Mammary epithelial cell (primary cell): ENCODE measurements at regions of chr6 and their contacts with region 1.

Region 1: GRCh38 chr6:124961777-124962611 is at the start of gene RNF217:
- DNase-seq: peak; percentile 62
- H3K4me3 ChIP-seq: peak within 1 kb of the TSS; percentile 74 to 87 (median 87)
- H3K27ac ChIP-seq: peak within 1 kb of the TSS; percentile 87
- H3K4me1 ChIP-seq: peaks cover 43% of the 10 kb centered on the region
- H3K27me3 ChIP-seq: no peaks in the 10 kb centered on the region
- CTCF ChIP-seq: no peak
- total RNA-seq, gene RNF217: 53.9 to 103 TPM

Region 2: DNA sequence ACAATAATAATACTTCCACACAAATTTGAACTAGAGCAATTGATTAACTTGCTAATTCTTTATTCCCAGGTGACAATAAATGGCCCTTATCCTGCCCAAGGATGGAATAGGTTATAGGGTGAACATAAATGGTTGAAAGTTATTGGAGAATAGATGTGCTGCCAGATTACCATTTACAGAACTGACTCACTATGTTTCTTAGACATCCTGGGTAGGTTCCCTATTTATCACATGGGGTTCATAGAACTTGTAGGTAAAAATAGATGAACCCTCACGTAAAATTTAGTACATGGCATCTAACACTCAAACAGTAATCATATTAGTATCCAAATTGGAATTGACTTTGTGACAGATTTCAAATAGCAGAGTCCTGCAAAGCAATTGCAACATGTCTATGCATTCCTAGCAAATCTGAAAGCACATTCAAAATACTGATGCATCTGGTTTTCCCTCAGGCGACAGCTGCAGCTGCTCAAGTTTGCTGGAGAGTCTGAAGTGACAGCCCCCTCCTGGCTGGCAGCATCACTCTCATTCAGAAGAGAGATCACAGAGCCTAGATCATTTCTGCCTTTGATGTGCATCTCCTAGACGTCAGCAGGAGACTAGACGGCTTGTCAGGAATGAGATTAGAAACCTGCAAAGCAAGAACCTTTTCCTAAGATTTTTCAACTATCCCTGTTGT is 80.0 kb before region 1 on chr6:
- CTCF ChIA-PET with region 1: no interaction called
- dilution Hi-C with region 1: no loop called
- in situ Hi-C with region 1: loop called in 1 of 2 experiments (anchors 5 kb)
- intact Hi-C with region 1: no loop called
- DNase-seq: peak; percentile 31
- H3K4me3 ChIP-seq: peak overlapping the region in 1 of 3 experiments; percentile 3
- H3K27ac ChIP-seq: no peak overlapping the region
- H3K4me1 ChIP-seq: peaks cover 18% of the 10 kb centered on the region
- H3K27me3 ChIP-seq: no peaks in the 10 kb centered on the region
- CTCF ChIP-seq: no peak

Region 3: DNA sequence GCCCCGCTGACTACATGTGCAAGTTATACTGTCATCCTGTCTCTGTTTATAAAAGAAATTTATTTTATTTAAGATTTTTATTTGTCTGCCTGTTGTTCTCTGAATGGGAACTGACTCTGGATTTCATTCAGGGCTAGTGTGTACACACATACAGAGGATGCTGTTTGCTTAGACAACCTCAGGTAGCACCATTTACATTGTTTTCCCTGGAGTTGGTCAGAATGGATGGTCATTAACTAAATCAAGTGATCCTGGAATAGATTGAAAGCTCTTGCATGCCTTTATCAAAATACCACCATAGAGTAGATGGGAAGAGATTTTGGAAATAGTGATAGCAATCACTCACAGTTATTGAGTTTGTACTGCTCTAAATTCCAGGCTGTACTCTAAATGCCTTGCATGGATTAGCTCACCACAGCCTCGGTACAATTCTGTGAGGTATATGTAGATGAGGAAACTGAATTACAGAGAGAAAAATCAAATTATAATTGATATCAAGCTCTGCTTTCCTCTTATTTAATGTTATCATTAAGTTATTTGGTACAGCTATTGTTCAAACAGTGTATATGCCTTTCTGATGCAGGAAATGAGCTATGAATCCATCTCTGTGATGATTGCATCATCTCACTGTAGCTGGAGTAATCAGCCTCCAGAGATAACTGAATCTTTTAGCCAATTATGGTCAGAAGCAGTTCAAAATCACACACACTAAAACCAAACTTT is 52.1 kb after region 1 on chr6:
- CTCF ChIA-PET with region 1: no interaction called
- dilution Hi-C with region 1: no loop called
- in situ Hi-C with region 1: no loop called
- intact Hi-C with region 1: loop called (anchors 2 kb)
- DNase-seq: peak; percentile 46
- H3K4me3 ChIP-seq: no peak overlapping the region
- H3K27ac ChIP-seq: peak overlapping the region; percentile 60
- H3K4me1 ChIP-seq: peaks cover 22% of the 10 kb centered on the region
- H3K27me3 ChIP-seq: no peaks in the 10 kb centered on the region
- CTCF ChIP-seq: no peak

Region 4: GRCh38 chr6:125031385-125031784 is 69.4 kb after region 1 on chr6:
- CTCF ChIA-PET with region 1: no interaction called
- dilution Hi-C with region 1: no loop called
- in situ Hi-C with region 1: no loop called
- intact Hi-C with region 1: no loop called
- DNase-seq: no peak
- H3K4me3 ChIP-seq: no peak overlapping the region
- H3K27ac ChIP-seq: no peak overlapping the region
- H3K4me1 ChIP-seq: no peaks in the 10 kb centered on the region
- H3K27me3 ChIP-seq: no peaks in the 10 kb centered on the region
- CTCF ChIP-seq: no peak

Region 5: GRCh38 chr6:125099211-125100073 is 137.4 kb after region 1 on chr6:
- CTCF ChIA-PET with region 1: no interaction called
- dilution Hi-C with region 1: loop called (anchors 25 kb)
- in situ Hi-C with region 1: no loop called
- intact Hi-C with region 1: no loop called
- DNase-seq: peak; percentile 44
- H3K4me3 ChIP-seq: peak overlapping the region; percentile 28 to 61 (median 50)
- H3K27ac ChIP-seq: no peak overlapping the region
- H3K4me1 ChIP-seq: peaks cover 62% of the 10 kb centered on the region
- H3K27me3 ChIP-seq: no peaks in the 10 kb centered on the region
- CTCF ChIP-seq: no peak

Region 6: DNA sequence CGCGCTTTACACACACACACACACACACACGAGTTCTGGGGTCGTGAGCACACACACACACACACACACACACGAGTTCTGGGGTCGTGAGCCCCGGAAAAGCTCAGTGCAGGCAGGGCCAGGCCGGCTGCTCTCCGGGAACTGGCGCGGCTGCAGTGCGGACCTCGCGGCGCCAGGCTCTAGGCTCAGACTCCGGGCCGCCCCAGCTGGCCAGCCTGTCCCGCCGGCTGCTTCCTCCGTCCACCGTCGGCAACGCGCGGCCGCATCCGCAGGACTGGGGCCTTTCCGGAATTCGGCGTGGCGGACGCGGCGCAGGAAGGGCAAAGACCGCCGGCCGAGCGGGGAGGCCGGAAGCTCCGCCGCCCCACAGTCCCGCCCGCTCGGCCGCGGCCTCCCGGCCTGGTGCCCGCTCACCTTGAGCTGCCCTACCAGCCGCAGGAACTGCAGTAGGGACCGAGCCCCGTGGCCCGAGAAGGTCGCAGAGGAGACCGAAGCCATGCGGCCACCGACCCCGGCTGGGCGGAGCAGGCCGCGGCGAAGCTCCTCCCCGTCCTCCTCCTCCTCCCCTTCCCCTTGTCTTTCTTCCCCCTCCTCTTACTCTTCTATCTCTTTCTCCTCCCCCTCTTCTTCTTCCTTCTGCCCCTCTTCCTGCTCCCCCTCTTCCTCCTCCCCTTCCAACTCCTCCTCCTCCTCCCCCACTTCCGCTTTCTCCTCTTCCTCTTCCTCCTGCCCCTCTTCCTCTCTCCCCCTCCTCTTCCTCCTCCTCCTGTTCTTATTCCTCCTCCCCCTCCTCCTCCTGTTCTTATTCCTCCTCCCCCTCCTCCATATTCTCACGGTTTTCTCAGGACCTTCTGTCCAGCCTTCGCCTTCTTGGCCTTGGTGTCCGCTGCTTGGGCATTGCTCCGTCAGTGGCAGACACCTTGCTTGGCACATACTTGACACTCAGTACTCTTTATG is 339.7 kb after region 1 on chr6 and contains the start of gene HDDC2:
- CTCF ChIA-PET with region 1: no interaction called
- dilution Hi-C with region 1: no loop called
- in situ Hi-C with region 1: no loop called
- intact Hi-C with region 1: loop called (anchors 5 kb)
- DNase-seq: peak; percentile 62
- H3K4me3 ChIP-seq: peak within 1 kb of the TSS; percentile 66 to 83 (median 81)
- H3K27ac ChIP-seq: peak within 1 kb of the TSS; percentile 27
- H3K4me1 ChIP-seq: peaks cover 2% of the 10 kb centered on the region
- H3K27me3 ChIP-seq: no peaks in the 10 kb centered on the region
- CTCF ChIP-seq: no peak
- total RNA-seq, gene HDDC2: 39.5 to 76.6 TPM